ENCODE measurements at regions of chr7 and their contacts with region 1.

Region 1: GRCh38 chr7:2886900-2887299 is 42.8 kb upstream of the GNA12 start:
- DNase-seq: peak; percentile 75
- ATAC-seq: peak; percentile 89
- H3K4me3 ChIP-seq: no peak overlapping the region
- H3K27ac ChIP-seq: no peak overlapping the region
- H3K4me1 ChIP-seq: peaks cover 3% of the 10 kb centered on the region; the same call in 1 of the 2 replicates
- H3K27me3 ChIP-seq: no peaks in the 10 kb centered on the region
- CTCF ChIP-seq: peak; percentile 84

Region 2: DNA sequence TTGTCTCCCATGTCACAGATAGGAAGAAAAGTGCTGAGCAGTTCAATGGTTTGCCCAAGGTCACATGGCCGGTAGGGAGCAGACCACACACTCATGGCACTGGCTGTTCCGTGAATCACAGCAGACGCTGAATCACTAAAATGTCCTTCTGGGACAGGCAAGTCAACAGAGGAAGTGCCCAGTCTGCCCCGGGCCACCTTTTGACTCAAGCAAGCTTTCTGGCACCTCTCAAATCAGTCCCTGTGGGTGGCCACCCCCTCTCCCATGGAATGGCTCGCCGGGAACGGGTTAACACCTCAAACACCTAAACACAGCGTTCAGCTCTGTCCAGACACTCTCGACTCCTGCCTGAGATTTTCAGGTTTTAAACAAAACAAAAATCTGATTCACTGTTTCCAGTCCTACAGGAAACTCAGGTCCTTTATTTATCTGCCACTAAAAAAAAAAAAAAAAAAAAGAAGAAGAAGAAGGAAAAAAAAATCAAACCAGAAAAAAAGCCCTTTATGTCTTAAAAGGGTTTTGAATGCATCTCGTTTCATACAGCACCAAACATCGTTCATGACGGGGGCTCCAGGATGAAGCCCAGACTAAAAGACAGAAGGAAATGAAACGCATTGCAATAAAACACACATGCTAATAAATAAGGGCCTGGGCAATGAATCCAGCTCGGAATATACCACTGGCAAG is 141.3 kb after region 1 on chr7:
- CTCF ChIA-PET with region 1: no interaction called
- POLR2A ChIA-PET with region 1: no interaction called
- intact Hi-C with region 1: no loop called
- DNase-seq: peak; percentile 71
- ATAC-seq: peak; percentile 87
- H3K4me3 ChIP-seq: peak overlapping the region; percentile 33; the same call in 1 of the 2 replicates
- H3K27ac ChIP-seq: peak overlapping the region; percentile 10
- H3K4me1 ChIP-seq: peaks cover 11% of the 10 kb centered on the region
- H3K27me3 ChIP-seq: peaks cover 3% of the 10 kb centered on the region; the same call in 1 of the 2 replicates
- CTCF ChIP-seq: no peak

Region 3: GRCh38 chr7:3154912-3155494 is 268.1 kb after region 1 on chr7:
- CTCF ChIA-PET with region 1: no interaction called
- POLR2A ChIA-PET with region 1: no interaction called
- intact Hi-C with region 1: loop called (anchors 1 kb)
- DNase-seq: peak; percentile 72
- ATAC-seq: peak; percentile 36; the same call in 1 of the 2 replicates
- H3K4me3 ChIP-seq: no peak overlapping the region
- H3K27ac ChIP-seq: no peak overlapping the region
- H3K4me1 ChIP-seq: peaks cover 8% of the 10 kb centered on the region
- H3K27me3 ChIP-seq: no peaks in the 10 kb centered on the region
- CTCF ChIP-seq: peak; percentile 78

Region 4: GRCh38 chr7:3200504-3200903 is 313.6 kb after region 1 on chr7:
- CTCF ChIA-PET with region 1: no interaction called
- POLR2A ChIA-PET with region 1: no interaction called
- intact Hi-C with region 1: loop called (anchors 1 kb)
- DNase-seq: peak; percentile 39
- ATAC-seq: peak; percentile 61; the same call in 1 of the 2 replicates
- H3K4me3 ChIP-seq: no peak overlapping the region
- H3K27ac ChIP-seq: no peak overlapping the region
- H3K4me1 ChIP-seq: no peaks in the 10 kb centered on the region
- H3K27me3 ChIP-seq: no peaks in the 10 kb centered on the region
- CTCF ChIP-seq: peak; percentile 61

Region 5: GRCh38 chr7:3399858-3400257 is 513.0 kb after region 1 on chr7:
- CTCF ChIA-PET with region 1: no interaction called
- POLR2A ChIA-PET with region 1: no interaction called
- intact Hi-C with region 1: loop called (anchors 5 kb)
- DNase-seq: peak; percentile 55
- ATAC-seq: peak; percentile 96
- H3K4me3 ChIP-seq: no peak overlapping the region
- H3K27ac ChIP-seq: no peak overlapping the region
- H3K4me1 ChIP-seq: peaks cover 10% of the 10 kb centered on the region
- H3K27me3 ChIP-seq: no peaks in the 10 kb centered on the region
- CTCF ChIP-seq: peak; percentile 73